Mammary epithelial cell (primary cell): ENCODE measurements at regions of chr2 and their contacts with region 1.

Region 1: GRCh38 chr2:101145406-101145805 is 5.8 kb downstream of the TBC1D8 start:
- DNase-seq: peak; percentile 81
- H3K4me3 ChIP-seq: no peak overlapping the region
- H3K27ac ChIP-seq: no peak overlapping the region
- H3K4me1 ChIP-seq: peaks cover 19% of the 10 kb centered on the region
- H3K27me3 ChIP-seq: no peaks in the 10 kb centered on the region
- CTCF ChIP-seq: no peak

Region 2: GRCh38 chr2:100260712-100261620 is 884.4 kb before region 1 on chr2:
- CTCF ChIA-PET with region 1: no interaction called
- dilution Hi-C with region 1: no loop called
- in situ Hi-C with region 1: no loop called
- intact Hi-C with region 1: no loop called
- DNase-seq: peak; percentile 37
- H3K4me3 ChIP-seq: no peak overlapping the region
- H3K27ac ChIP-seq: no peak overlapping the region
- H3K4me1 ChIP-seq: no peaks in the 10 kb centered on the region
- H3K27me3 ChIP-seq: no peaks in the 10 kb centered on the region
- CTCF ChIP-seq: peak; percentile 46 to 48

Region 3: GRCh38 chr2:101113396-101114267 is 31.8 kb before region 1 on chr2:
- CTCF ChIA-PET with region 1: no interaction called
- dilution Hi-C with region 1: no loop called
- in situ Hi-C with region 1: no loop called
- intact Hi-C with region 1: loop called (anchors 1 kb)
- DNase-seq: peak; percentile 93
- H3K4me3 ChIP-seq: no peak overlapping the region
- H3K27ac ChIP-seq: peak overlapping the region; percentile 71
- H3K4me1 ChIP-seq: peaks cover 37% of the 10 kb centered on the region
- H3K27me3 ChIP-seq: no peaks in the 10 kb centered on the region
- CTCF ChIP-seq: no peak